H1 (cell line): ENCODE measurements at regions of chr22 and their contacts with region 1.

Region 1: DNA sequence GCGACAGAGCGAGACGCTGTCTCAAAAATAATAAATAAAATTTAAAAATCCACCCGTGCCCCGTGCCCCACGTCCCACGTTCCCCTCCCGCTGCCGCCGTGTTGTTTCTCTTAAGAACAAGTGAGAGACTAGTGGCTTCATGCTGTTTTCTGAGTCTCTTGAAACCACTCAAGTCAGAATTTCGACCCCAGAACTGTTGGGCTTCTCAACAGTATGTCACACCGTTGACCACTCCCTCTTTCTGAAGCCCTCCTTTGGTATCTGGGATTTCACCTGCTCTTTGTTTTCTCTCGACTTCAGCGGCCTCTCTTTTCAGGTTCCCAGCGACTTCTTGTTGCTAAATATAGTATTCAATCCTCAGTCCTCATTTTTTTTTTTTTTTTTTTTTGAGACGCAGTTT is 974 bp downstream of the PPIL2 start:
- DNase-seq: no peak
- H3K4me3 ChIP-seq: peak overlapping the region; percentile 68 to 90 (median 79); a peak in 5 of 8 replicates
- H3K27ac ChIP-seq: no peak overlapping the region
- H3K4me1 ChIP-seq: peaks cover 0 to 3% (median 0%) of the 10 kb centered on the region in 4 experiments; a peak in 1 of 7 replicates
- H3K27me3 ChIP-seq: no peaks in the 10 kb centered on the region; a peak in 1 of 7 replicates
- CTCF ChIP-seq: no peak
- EP300 ChIP-seq: no peak
- POLR2A ChIP-seq: no peak
- RAD21 ChIP-seq: no peak

Region 2: DNA sequence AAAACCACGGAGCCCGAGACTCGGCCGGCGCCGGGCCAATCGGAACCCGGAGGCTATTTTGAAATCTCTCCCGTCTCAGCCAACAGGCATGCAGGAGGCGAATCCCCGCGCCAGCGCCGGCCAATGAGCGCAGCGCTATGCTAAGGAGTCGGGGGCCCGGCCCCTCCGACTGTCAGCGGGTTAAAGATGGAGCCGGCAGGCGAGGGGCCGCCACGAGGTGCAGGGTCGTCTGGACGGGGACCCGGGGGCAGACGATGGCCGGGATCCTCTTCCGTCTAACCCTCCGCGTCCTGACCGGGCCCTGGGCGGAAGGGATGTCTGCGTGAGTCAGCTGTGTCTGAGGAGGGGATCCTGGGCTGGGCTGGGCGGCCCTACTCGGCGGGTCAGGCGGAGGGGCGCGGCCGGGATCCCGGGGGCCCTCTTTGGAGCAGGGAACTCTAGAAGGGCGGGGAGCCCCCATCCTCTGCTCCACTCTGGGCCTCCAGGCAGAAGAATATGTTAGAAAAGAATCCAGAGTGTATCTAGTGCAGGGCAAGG is 14.7 kb before region 1 on chr22:
- CTCF ChIA-PET with region 1: interaction called, 5 read pairs
- POLR2A ChIA-PET with region 1: interaction called, 27 read pairs
- DNase-seq: peak in 1 of 2 experiments; percentile 94
- H3K4me3 ChIP-seq: peak overlapping the region; percentile 78 to 98 (median 81)
- H3K27ac ChIP-seq: peak overlapping the region; percentile 31; the same call in 1 of the 2 replicates
- H3K4me1 ChIP-seq: peaks cover 3 to 21% (median 9%) of the 10 kb centered on the region in 4 experiments
- H3K27me3 ChIP-seq: no peaks in the 10 kb centered on the region
- CTCF ChIP-seq: no peak
- EP300 ChIP-seq: no peak
- POLR2A ChIP-seq: peak in 1 of 2 experiments; percentile 72; a peak in 2 of 3 replicates
- RAD21 ChIP-seq: no peak